BJ (cell line): ENCODE measurements at regions of chr7 and their contacts with region 1.

Region 1: DNA sequence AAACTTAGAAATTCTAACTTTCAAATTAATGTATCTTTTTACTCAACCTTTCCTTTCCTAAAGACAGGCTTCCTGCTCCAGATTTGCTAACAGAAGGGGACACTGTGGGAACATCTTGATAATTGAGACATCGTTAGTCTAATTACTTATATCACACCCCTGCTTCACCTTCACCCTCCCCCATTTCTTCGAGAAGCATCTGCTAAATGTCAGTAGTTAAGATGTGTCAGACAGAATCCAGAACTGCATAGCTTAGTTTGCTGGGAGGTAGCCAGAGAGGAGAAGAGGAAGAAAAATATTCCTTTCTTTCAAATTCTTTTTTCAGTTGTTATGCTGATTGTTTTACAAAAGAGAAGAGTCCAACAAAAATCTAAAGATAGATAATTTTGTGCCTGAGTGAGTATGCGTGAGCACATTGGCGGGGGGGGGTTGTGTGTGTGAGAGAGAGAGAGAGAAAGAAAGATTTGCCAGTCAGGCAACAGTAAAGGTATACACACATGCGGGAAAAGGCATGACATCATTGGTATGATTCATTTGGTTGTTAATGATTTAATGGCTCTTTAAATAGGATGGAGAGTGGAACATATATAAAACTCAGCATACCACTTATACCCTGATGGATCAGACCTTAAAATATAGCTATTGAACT is 192.4 kb downstream of the PTN start:
- DNase-seq: no peak
- H3K4me3 ChIP-seq: no peak overlapping the region
- H3K27me3 ChIP-seq: no peaks in the 10 kb centered on the region
- CTCF ChIP-seq: no peak

Region 2: GRCh38 chr7:137313201-137313600 is 162.0 kb after region 1 on chr7:
- CTCF ChIA-PET with region 1: no interaction called
- POLR2A ChIA-PET with region 1: no interaction called
- DNase-seq: no peak
- H3K4me3 ChIP-seq: no peak overlapping the region
- H3K27me3 ChIP-seq: no peaks in the 10 kb centered on the region
- CTCF ChIP-seq: no peak

Region 3: GRCh38 chr7:137462074-137462715 is 311.0 kb after region 1 on chr7:
- CTCF ChIA-PET with region 1: no interaction called
- POLR2A ChIA-PET with region 1: interaction called, 25 read pairs
- DNase-seq: no peak
- H3K4me3 ChIP-seq: no peak overlapping the region
- H3K27me3 ChIP-seq: no peaks in the 10 kb centered on the region
- CTCF ChIP-seq: no peak